ENCODE measurements at regions of chr11 and their contacts with region 1.

Region 1: DNA sequence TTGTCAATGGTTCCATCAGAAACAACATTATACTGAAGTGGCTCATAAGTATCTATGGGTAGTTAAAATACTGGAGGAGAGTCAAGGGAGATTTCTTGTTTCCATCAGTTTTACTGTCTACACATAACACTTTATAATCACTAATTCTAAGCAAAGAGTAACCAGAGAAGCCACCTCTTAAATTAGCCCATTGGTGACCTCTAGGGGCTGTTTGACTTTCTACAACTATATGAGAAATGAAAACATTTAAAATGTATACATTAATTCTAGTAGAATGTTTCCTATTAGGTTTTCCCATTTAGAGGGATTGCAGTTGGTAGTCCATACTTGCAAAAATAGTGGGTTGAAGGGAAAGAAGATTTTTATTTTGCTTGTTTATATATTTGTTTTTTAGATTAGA is 504.3 kb downstream of the FAM181B start:
- DNase-seq: no peak
- ATAC-seq: no peak
- H3K4me3 ChIP-seq: no peak overlapping the region
- H3K27ac ChIP-seq: no peak overlapping the region
- H3K4me1 ChIP-seq: no peaks in the 10 kb centered on the region
- H3K27me3 ChIP-seq: no peaks in the 10 kb centered on the region
- CTCF ChIP-seq: no peak

Region 2: DNA sequence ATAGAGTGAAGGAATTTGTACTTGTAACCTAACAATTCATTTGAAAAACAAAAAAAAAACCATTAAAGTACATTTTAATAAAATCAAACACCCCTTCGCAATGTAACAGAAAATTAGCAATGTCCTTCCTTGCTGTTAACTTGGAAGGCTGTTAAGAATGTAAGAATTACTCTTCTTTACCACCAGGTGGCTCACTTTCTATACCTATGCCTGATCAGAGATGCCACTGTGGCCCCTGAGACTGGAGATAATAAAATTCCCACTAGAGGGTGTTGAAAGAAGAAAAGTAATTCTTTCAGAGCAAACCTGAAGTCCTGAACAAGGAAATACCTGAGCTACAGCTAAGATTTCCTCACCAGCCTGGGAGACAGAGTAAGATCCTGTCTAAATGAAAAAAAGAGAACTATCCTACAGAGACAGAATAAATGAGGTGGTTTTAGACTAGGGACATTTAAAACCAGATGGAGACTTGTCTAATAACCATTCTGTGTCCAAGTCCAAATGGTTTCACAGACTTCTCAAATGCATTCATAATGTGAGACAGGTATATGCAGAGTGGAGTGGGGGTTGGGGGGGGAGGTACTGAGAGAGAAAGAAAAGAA is 585.0 kb before region 1 on chr11:
- intact Hi-C with region 1: loop called (anchors 5 kb)
- DNase-seq: no peak
- ATAC-seq: peak; percentile 61 to 64
- H3K4me3 ChIP-seq: no peak overlapping the region
- H3K27ac ChIP-seq: no peak overlapping the region
- H3K4me1 ChIP-seq: no peaks in the 10 kb centered on the region
- H3K27me3 ChIP-seq: no peaks in the 10 kb centered on the region
- CTCF ChIP-seq: peak; percentile 63

Region 3: DNA sequence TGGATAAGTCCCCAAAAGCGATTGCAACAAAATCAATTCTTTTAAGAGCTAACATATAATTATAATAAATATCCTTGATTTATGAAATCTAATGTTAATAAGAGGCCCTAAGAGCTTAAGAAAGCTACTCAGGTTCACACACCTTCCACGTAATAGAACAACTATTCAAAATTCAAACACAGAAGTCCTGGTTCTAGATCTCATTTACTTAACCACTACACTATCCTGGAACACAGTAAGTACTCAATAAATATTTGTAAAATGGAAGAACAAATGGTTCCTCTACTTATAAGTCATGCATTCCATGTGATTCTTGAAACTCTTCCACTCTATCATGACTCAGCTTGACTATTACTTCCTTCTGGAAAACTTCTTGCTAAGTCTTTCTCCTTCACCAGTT is 236.1 kb after region 1 on chr11:
- intact Hi-C with region 1: no loop called
- DNase-seq: no peak
- ATAC-seq: peak; percentile 41 to 85
- H3K4me3 ChIP-seq: no peak overlapping the region
- H3K27ac ChIP-seq: no peak overlapping the region
- H3K4me1 ChIP-seq: no peaks in the 10 kb centered on the region
- H3K27me3 ChIP-seq: no peaks in the 10 kb centered on the region
- CTCF ChIP-seq: no peak

Measured in lower lobe of right lung (tissue), 2 donors.